ENCODE measurements at regions of chr17 and their contacts with region 1.

Region 1: DNA sequence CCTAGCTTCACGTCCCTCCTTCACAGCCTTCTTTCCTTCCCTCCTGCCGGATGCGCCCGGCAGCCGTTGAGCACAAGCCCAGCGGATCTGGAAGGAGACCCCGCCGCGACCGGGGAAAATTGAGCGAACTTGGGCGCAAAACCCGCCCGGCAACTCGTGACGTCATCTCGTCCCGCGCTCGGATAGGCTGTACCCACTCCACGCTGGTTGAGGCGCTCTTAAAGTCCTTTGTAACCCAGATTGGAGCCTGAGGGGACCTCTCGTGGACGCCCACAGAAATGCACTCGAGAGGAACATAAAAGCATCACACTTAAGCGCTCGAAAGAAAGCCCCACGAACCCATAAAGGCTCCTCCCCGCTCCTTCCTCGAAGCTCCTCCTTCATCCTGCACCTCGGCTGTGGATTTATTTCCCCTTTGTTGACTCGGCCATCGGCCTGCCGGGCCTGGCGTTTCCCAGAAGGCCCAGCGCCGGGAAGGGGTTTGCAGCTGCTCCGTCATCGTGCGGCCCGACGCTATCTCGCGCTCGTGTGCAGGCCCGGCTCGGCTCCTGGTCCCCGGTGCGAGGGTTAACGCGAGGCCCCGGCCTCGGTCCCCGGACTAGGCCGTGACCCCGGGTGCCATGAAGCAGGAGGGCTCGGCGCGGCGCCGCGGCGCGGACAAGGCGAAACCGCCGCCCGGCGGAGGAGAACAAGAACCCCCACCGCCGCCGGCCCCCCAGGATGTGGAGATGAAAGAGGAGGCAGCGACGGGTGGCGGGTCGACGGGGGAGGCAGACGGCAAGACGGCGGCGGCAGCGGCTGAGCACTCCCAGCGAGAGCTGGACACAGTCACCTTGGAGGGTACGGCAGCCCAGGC is at the start of gene PSMD3:
- DNase-seq: peak; percentile 100
- ATAC-seq: peak; percentile 92
- H3K4me3 ChIP-seq: peak within 1 kb of the TSS; percentile 76 to 93 (median 91)
- H3K4me3 Mint-ChIP-seq: peak within 1 kb of the TSS; percentile 96
- H3K27ac ChIP-seq: peak within 1 kb of the TSS; percentile 92 to 97
- H3K27ac Mint-ChIP-seq: peak within 1 kb of the TSS; percentile 95
- H3K4me1 ChIP-seq: peaks cover 25 to 26% of the 10 kb centered on the region in 2 donors
- H3K4me1 Mint-ChIP-seq: peaks cover 38% of the 10 kb centered on the region
- H3K27me3 ChIP-seq: no peaks in the 10 kb centered on the region
- H3K27me3 Mint-ChIP-seq: no peaks in the 10 kb centered on the region
- CTCF ChIP-seq: peak; percentile 76
- total RNA-seq, gene PSMD3: 69.4 and 76.6 TPM in 2 replicates

Region 2: DNA sequence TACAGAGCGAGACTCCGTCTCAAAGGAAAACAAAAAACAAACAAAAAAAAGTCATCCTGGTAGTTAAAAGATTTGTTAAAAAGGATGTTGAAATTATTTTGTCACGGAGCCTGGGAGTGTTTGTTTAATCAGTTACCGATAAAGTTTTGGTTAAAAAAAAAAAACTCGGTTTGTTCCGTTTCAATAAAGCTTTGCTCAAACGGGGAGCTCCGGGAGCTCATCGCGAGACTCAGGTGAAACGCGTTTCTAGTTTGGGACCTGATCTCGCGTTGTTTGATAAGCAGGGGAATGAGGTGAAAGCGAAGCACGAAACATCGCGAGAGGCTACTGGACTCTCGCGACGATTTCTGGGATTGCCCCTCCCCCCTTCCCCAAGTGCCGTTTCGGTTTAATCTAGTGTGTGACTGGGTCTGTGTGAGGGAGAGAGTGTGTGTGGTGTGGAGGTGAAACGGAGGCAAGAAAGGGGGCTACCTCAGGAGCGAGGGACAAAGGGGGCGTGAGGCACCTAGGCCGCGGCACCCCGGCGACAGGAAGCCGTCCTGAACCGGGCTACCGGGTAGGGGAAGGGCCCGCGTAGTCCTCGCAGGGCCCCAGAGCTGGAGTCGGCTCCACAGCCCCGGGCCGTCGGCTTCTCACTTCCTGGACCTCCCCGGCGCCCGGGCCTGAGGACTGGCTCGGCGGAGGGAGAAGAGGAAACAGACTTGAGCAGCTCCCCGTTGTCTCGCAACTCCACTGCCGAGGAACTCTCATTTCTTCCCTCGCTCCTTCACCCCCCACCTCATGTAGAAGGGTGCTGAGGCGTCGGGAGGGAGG is 519.3 kb before region 1 on chr17 and contains the start of gene CDK12:
- CTCF ChIA-PET with region 1: no interaction called
- POLR2A ChIA-PET with region 1: no interaction called
- intact Hi-C with region 1: loop called (anchors 5 kb)
- DNase-seq: peak; percentile 99
- ATAC-seq: peak; percentile 88
- H3K4me3 ChIP-seq: peak within 1 kb of the TSS; percentile 82 to 98 (median 86)
- H3K4me3 Mint-ChIP-seq: peak within 1 kb of the TSS; percentile 93
- H3K27ac ChIP-seq: peak within 1 kb of the TSS; percentile 94 to 97
- H3K27ac Mint-ChIP-seq: peak within 1 kb of the TSS; percentile 96
- H3K4me1 ChIP-seq: peaks cover 20 to 32% of the 10 kb centered on the region in 2 donors
- H3K4me1 Mint-ChIP-seq: peaks cover 39% of the 10 kb centered on the region
- H3K27me3 ChIP-seq: no peaks in the 10 kb centered on the region
- H3K27me3 Mint-ChIP-seq: no peaks in the 10 kb centered on the region
- CTCF ChIP-seq: no peak
- total RNA-seq, gene CDK12: 117 and 134 TPM in 2 replicates

Region 3: DNA sequence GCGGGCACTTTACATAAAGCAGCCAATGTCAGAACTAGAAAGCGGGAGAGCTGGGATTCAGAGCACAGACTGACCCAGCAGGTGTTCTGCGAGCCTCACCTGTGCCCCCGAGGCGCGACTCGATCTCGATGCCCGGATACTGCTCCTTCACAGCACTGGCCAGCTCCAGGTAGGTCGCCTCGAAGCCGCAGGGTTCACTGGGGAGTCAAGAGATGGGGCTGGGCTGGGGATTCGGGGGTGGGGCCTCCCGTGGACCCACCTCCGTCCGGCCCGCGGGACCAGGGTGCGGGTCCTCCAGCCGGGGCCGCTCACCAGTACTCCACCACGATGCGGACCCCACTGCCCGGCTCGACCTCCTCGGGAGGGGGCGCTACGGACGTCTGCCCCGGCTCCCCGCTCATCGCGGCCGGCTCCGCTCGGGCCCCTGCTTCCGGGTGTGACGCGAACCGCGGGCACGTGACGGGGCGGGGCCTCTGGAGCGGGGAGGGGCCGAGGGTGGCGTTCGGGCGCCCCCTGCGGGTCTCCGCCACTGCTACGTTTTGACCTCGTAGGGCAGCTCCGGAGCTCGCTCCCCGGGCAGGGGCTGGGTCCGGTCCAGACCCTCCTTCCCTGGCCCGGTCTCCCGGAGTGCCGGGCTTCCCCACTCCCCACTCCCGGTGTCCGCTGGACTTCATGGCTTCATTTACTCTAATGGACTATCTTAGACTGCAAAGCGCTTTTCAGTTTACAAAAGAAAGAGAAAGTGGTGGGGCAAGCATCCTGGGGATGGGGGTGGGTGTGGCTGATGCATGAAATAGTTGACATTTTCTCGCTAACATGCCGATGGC is 250.3 kb before region 1 on chr17 and contains the start of gene MIEN1:
- CTCF ChIA-PET with region 1: no interaction called
- POLR2A ChIA-PET with region 1: no interaction called
- intact Hi-C with region 1: loop called (anchors 1 kb)
- DNase-seq: peak; percentile 95
- ATAC-seq: peak; percentile 94
- H3K4me3 ChIP-seq: peak within 1 kb of the TSS; percentile 63 to 100 (median 78)
- H3K4me3 Mint-ChIP-seq: peak within 1 kb of the TSS; percentile 93
- H3K27ac ChIP-seq: peak within 1 kb of the TSS; percentile 82 to 96
- H3K27ac Mint-ChIP-seq: peak within 1 kb of the TSS; percentile 94
- H3K4me1 ChIP-seq: peaks cover 11 to 17% of the 10 kb centered on the region in 2 donors
- H3K4me1 Mint-ChIP-seq: peaks cover 28% of the 10 kb centered on the region
- H3K27me3 ChIP-seq: no peaks in the 10 kb centered on the region
- H3K27me3 Mint-ChIP-seq: no peaks in the 10 kb centered on the region
- CTCF ChIP-seq: peak; percentile 96
- total RNA-seq, gene MIEN1: 37.9 and 41.1 TPM in 2 replicates

Region 4: GRCh38 chr17:39863918-39864746 is 116.4 kb before region 1 on chr17 and contains the start of gene IKZF3:
- CTCF ChIA-PET with region 1: interaction called, 3 read pairs
- POLR2A ChIA-PET with region 1: interaction called, 5 read pairs
- intact Hi-C with region 1: loop called (anchors 2 kb)
- DNase-seq: peak; percentile 90
- ATAC-seq: peak; percentile 62
- H3K4me3 ChIP-seq: peak within 1 kb of the TSS; percentile 80 to 99 (median 91)
- H3K4me3 Mint-ChIP-seq: peak within 1 kb of the TSS; percentile 99
- H3K27ac ChIP-seq: peak within 1 kb of the TSS; percentile 94 to 96
- H3K27ac Mint-ChIP-seq: peak within 1 kb of the TSS; percentile 87
- H3K4me1 ChIP-seq: peaks cover 43 to 55% of the 10 kb centered on the region in 2 donors
- H3K4me1 Mint-ChIP-seq: peaks cover 62% of the 10 kb centered on the region
- H3K27me3 ChIP-seq: no peaks in the 10 kb centered on the region
- H3K27me3 Mint-ChIP-seq: no peaks in the 10 kb centered on the region
- CTCF ChIP-seq: peak; percentile 45
- total RNA-seq, gene IKZF3: 178 and 187 TPM in 2 replicates

Region 5: DNA sequence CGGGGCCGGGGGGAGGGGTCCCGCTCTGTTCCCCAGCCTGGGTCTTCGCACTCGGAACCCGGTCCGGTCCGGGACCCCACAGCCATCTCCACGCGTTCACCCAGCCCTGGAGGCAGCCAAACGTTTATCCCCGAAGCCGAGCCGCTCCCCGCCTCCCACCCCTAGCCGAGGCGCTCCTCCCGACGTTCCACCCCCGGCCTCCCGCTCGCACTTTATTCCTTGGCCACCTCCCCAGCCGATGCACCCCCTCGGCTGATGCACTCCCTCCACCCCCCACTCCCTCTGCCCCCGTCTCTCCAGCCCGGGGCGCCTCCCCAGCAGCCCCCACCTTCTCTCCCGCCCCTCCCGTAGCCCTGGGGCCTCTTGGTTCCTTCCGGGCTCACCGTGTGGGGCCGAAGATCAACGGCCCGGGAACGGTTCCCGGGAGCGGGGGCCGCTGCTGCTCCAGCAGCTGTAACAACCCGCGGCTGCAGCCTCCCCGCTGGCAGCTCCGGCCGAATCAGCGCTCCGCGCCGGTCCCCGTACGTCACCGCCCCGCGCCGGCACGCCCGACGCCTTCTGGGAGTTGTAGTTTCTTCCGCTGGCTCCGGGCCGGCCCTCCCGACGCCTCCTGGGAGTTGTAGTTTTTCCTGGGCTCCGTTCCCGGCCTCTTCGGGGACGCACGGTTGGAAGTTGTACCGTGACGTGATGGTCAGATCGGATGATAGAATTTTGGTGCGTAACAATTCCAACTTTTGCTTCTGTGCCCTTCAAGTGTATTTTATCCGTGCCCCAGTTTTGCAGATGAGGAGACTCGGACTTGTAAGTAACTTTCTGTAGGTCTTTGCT is 53.3 kb before region 1 on chr17 and contains the starts of genes LRRC3C and ORMDL3:
- CTCF ChIA-PET with region 1: interaction called, 6 read pairs
- POLR2A ChIA-PET with region 1: interaction called, 3 read pairs
- intact Hi-C with region 1: loop called (anchors 1 kb)
- DNase-seq: peak; percentile 93
- ATAC-seq: peak; percentile 96
- H3K4me3 ChIP-seq: peak within 1 kb of the TSS; percentile 66 to 93 (median 79)
- H3K4me3 Mint-ChIP-seq: peak within 1 kb of the TSS; percentile 92
- H3K27ac ChIP-seq: peak within 1 kb of the TSS; percentile 46 to 73
- H3K27ac Mint-ChIP-seq: peak within 1 kb of the TSS; percentile 87
- H3K4me1 ChIP-seq: peaks cover 33 to 34% of the 10 kb centered on the region in 2 donors
- H3K4me1 Mint-ChIP-seq: peaks cover 36% of the 10 kb centered on the region
- H3K27me3 ChIP-seq: no peaks in the 10 kb centered on the region
- H3K27me3 Mint-ChIP-seq: no peaks in the 10 kb centered on the region
- CTCF ChIP-seq: no peak
- total RNA-seq, gene LRRC3C: not detected in 2 replicates
- total RNA-seq, gene ORMDL3: 43.4 and 51.8 TPM in 2 replicates

Region 6: DNA sequence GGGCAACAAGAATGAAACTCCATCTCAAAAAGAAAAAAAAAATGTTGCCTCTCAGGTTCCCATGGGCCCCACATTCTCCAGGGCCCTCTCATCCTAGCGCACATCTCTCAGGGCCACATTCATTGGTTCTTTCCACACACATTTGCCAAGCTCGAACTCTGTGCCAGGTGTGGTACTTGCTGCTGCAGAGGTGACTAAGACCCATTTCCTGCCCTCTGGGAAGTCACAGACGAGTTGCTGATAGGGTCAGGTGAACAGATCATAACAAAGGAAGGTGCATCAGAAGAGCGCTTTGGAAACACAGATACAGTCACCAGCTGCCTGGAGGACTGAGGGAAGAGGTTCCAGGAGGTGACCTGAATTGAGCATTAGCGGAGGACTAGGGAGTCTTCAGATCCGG is 16.8 kb before region 1 on chr17:
- CTCF ChIA-PET with region 1: interaction called, 97 read pairs
- POLR2A ChIA-PET with region 1: interaction called, 12 read pairs
- intact Hi-C with region 1: loop called (anchors 1 kb)
- DNase-seq: no peak
- ATAC-seq: no peak
- H3K4me3 ChIP-seq: no peak overlapping the region
- H3K4me3 Mint-ChIP-seq: no peak overlapping the region
- H3K27ac ChIP-seq: no peak overlapping the region
- H3K27ac Mint-ChIP-seq: no peak overlapping the region
- H3K4me1 ChIP-seq: peaks cover 12 to 13% of the 10 kb centered on the region in 2 donors
- H3K4me1 Mint-ChIP-seq: peaks cover 9% of the 10 kb centered on the region
- H3K27me3 ChIP-seq: no peaks in the 10 kb centered on the region
- H3K27me3 Mint-ChIP-seq: peaks cover 15% of the 10 kb centered on the region
- CTCF ChIP-seq: no peak